ENCODE measurements at regions of chr1 and their contacts with region 1.

Region 1: DNA sequence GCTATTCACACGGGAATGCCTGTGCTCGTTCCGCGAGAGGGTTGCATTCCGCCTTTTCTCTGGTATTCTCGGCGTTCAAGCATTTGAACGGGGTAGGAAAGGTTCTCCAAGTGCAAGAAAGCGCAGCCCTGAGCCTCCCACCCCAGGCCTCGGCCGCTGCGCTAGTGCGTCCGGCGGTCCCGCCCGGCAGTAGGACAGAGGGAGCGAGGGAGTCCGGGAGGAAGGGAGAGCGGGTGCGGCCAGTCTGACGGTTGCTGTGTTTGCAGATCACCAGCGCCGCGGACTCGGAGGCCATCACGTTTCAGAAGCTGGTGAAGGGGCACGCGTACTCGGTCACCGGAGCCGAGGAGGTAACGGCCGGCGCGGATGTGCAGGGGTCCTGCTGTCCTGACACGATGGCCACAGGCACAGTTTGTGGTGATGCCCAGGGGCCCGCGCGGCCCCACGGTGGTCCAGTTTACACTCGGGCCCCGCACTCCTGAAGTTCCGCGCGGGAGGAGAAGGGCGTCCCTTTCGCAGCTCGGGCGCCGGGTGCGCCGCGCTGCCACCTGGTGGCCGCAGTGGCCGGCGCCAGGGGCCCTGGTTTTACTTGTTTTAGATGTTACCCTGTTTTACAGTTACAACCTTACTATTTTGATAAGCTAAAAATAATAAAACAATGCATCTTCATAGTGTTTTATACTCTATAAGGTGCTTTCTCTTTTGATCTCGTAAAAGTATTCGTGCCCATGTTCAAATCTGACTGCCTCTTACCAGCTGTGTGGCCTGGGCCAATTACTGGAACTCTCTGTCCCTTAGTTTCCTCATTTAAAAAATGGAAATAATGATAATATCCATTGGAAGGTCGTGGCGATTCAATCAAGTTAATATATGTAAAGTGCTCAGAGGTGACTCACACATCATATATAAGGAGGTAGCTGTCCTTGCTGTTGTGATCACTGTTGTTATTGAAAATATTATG is 36.7 kb downstream of the CAPN2 start:
- DNase-seq: peak; percentile 61 to 95 (median 72)
- ATAC-seq: peak; percentile 91
- H3K4me3 ChIP-seq: peak overlapping the region; percentile 16 to 34
- H3K27ac ChIP-seq: peak overlapping the region; percentile 63 to 72
- H3K4me1 ChIP-seq: peaks cover 8 to 31% of the 10 kb centered on the region in 2 donors
- H3K27me3 ChIP-seq: no peaks in the 10 kb centered on the region
- CTCF ChIP-seq: peak; percentile 92 to 95

Region 2: DNA sequence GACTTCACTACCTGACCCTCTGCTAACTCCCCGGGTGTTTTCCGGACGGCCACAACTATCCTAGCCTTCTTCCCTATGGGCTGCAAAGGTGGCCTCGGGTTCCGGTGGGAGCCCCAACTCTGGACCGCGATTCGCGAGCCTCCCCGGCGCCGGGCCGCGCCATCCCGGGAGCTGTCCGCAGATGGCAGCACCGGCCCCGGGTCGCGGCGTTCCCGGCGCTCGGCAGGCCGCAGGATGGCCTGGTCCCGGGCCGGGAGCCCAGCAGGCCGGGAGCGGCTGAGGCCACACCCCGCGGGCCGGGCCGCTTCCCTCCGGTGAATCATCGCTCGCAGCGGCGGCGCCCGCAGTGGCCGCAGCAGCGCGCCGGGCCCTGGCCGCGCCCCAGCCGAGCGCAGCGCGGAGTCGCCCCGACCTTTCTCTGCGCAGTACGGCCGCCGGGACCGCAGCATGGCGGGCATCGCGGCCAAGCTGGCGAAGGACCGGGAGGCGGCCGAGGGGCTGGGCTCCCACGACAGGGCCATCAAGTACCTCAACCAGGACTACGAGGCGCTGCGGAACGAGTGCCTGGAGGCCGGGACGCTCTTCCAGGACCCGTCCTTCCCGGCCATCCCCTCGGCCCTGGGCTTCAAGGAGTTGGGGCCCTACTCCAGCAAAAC is 36.7 kb before region 1 on chr1 and contains the start of gene CAPN2:
- intact Hi-C with region 1: loop called in 1 of 2 experiments (anchors 5 kb)
- DNase-seq: peak; percentile 79 to 97 (median 87)
- ATAC-seq: peak; percentile 83
- H3K4me3 ChIP-seq: peak within 1 kb of the TSS; percentile 73
- H3K27ac ChIP-seq: peak within 1 kb of the TSS; percentile 96 to 98
- H3K4me1 ChIP-seq: peaks cover 36 to 62% of the 10 kb centered on the region in 2 donors
- H3K27me3 ChIP-seq: no peaks in the 10 kb centered on the region
- CTCF ChIP-seq: peak; percentile 71 to 75
- polyA plus RNA-seq, gene CAPN2: 139 to 164 (median 158) TPM

Region 3: DNA sequence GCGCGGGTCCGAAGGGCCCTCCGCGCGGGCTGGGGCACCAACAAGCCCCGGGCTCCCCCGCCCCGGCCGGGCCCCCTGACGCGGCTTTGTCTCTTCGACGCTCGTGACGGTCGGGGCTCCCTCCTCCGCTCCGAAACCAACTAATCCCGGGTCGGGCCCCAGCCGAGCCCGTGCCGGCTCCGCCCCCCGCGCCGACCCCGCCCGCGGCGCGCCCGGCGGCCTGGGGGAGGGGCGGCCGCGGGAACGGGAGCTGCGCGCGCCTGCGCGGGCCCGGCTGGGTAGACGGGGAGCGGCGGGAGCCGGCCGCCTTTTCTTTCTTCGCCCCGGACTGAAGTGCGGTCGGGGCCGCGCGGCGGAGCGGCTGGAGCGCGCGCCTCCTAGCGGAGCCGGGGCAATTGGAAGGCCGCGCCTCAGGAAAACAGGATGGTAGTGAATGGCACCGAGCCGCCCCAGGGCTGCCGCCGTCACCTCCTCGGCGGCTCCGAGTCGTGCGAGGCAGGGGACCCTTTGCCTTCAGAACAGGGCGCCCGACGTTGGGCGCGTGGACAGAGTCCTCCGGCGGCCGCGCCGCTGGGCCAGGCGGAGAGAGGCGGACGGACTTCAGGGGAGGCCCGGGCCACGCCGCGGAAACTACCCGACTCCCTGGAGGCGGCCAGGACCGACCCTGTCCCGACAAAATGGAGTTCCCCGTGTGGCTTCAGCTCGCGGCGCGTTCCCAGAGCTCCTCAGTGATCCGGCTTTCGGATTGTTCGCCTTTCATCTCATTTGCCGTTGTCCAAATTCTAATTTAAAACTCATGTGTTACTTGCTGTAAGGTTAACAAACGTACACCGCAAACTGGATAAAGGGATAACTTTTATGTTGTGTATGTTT is 97.0 kb after region 1 on chr1 and contains the start of gene TP53BP2:
- intact Hi-C with region 1: no loop called
- DNase-seq: peak; percentile 90 to 98 (median 94)
- ATAC-seq: peak; percentile 89
- H3K4me3 ChIP-seq: peak within 1 kb of the TSS; percentile 78 to 84
- H3K27ac ChIP-seq: peak within 1 kb of the TSS; percentile 99 to 100
- H3K4me1 ChIP-seq: peaks cover 12 to 45% of the 10 kb centered on the region in 2 donors
- H3K27me3 ChIP-seq: no peaks in the 10 kb centered on the region
- CTCF ChIP-seq: peak; percentile 59 to 63
- polyA plus RNA-seq, gene TP53BP2: 51.8 to 58.6 (median 55.5) TPM

Region 4: GRCh38 chr1:223870617-223871574 is 121.8 kb after region 1 on chr1:
- intact Hi-C with region 1: no loop called
- DNase-seq: peak in 1 of 4 donors; percentile 75
- ATAC-seq: peak; percentile 93
- H3K4me3 ChIP-seq: no peak overlapping the region
- H3K27ac ChIP-seq: peak overlapping the region in 1 of 2 donors; percentile 57
- H3K4me1 ChIP-seq: peaks cover 0 to 7% of the 10 kb centered on the region in 2 donors
- H3K27me3 ChIP-seq: no peaks in the 10 kb centered on the region
- CTCF ChIP-seq: no peak

Measured in left lung (tissue), 14 donors.